HEK293 (cell line): ENCODE measurements at regions of chr5 and their contacts with region 1.

Region 1: GRCh38 chr5:44774279-44774880 is 34.4 kb upstream of the MRPS30 start:
- H3K4me3 ChIP-seq: no peak overlapping the region
- H3K27ac ChIP-seq: no peak overlapping the region
- H3K4me1 ChIP-seq: no peaks in the 10 kb centered on the region
- CTCF ChIP-seq: peak; percentile 33; the same call in 1 of the 2 replicates

Region 2: DNA sequence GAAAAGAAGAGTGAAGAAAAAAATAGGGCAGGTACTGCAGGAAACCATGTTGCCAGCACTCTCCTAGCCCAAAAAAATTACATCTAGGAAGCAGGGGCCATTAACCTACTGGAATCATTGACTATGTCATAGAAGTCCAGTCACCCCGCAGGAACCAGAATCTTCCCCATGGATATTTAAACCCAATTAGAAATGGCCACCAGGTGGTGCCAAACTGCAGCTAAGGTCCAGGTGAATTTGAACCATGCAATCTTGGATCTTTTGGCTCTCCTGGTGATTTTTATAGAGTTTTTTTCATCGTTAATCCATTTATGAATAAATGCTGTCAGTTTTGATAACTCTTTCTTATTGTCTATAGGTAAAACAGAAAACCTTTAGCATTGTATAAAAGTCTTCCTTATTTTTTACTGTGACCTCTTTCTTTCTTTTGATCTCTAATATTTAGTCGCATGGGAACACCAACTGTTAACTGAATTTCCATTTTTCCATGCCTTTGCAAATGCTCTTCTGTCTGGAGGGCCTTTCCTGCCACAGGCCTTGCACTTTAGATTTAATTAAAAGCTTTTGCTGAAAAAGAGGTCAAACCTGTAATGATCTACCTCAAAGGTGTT is 237.6 kb before region 1 on chr5:
- CTCF ChIA-PET with region 1: interaction called, 11 read pairs
- POLR2A ChIA-PET with region 1: no interaction called
- H3K4me3 ChIP-seq: no peak overlapping the region
- H3K27ac ChIP-seq: no peak overlapping the region
- H3K4me1 ChIP-seq: no peaks in the 10 kb centered on the region
- CTCF ChIP-seq: no peak